ENCODE measurements at regions of chr2 and their contacts with region 1.

Region 1: DNA sequence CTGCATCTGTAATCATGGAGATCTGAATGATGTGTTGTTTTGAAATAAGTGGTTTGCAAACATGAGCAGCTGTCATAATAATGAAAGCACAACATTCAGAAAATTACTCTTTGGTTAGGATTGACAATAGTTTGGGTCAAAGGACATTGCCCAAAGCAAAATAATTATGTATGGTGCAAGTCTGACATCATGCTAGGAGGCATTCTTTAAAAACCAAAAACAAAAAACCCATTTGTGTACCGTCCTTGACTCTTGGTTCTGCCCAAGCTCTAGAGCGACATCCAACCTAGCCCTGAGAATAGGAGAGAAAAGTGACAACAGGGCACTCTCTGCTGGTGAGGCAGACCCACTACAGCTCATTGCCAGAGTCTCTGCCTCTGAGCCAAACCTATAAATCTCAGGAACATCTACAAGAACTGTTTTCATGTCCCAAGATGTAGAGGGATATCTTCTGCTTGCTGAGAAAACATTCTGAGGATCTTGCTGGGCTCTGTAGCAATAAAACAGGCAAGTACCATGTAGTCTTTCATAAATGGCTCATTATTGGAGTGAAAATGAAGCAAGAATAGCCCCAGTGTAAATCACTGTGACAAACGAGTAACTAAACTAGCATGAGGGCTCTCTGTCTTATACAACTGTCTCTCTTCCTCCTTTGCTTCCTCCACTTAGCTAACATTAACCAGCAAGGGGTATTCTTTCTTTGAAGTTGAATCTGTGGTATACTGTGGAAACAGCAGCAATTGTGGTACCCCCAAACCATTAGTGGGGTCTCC is 266.8 kb upstream of the CXCR4 start:
- DNase-seq: peak; percentile 73
- H3K4me3 Mint-ChIP-seq: no peak overlapping the region
- H3K27ac Mint-ChIP-seq: no peak overlapping the region
- H3K4me1 Mint-ChIP-seq: peaks cover 41% of the 10 kb centered on the region
- H3K27me3 Mint-ChIP-seq: no peaks in the 10 kb centered on the region

Region 2: DNA sequence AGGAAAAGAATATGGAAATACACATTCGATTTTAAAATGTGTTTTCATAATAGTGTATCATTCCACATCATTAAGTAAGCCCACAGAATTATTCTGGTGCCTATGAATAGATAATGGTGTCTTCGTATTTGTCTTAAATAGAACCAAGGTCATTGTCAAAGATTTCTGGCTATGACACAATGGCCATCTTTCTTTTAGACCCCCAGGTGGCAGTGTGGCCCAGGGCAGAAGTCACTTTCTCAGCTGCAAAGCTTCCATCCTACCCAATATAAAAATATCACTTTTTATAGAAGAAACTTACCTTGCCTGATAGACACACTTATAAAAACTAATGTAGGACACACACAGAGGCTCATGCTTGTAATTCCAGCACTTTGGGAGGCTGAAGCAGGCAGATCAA is 911.1 kb before region 1 on chr2:
- CTCF ChIA-PET with region 1: no interaction called
- intact Hi-C with region 1: loop called (anchors 10 kb)
- DNase-seq: peak; percentile 40
- H3K4me3 Mint-ChIP-seq: no peak overlapping the region
- H3K27ac Mint-ChIP-seq: no peak overlapping the region
- H3K4me1 Mint-ChIP-seq: peaks cover 2% of the 10 kb centered on the region
- H3K27me3 Mint-ChIP-seq: no peaks in the 10 kb centered on the region

Region 3: DNA sequence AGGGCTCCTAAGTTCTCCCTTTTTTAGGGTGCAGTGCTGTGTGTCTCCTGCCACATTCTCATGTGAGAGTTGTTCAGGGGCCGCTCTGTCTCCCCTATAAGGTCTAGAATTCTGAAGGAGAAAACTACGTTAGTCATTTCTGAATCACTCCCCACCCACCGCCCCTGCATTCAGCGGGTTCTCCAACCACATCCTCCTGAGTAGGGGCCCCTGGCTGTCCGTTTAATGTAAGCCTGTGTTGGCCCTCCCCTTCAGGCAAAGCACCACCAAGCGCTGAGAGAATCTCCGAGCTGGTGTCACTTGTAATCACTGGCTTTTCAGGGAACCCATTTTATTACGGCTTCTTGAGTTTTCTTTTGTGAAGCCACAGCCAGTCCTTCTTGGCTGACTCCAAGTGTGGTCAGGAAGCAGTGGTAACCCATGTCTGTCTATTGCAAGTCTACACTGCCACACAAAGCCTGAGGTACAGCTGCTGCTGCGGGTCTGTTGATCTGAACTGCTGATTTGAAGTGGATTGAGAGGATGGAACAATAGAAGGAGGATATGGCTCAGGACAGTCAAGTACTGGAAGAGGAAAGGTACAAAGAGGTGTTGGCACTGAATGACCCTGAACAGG is 564.6 kb before region 1 on chr2:
- CTCF ChIA-PET with region 1: interaction called, 6 read pairs
- intact Hi-C with region 1: loop called (anchors 1 kb)
- DNase-seq: peak; percentile 94
- H3K4me3 Mint-ChIP-seq: peak overlapping the region; percentile 64
- H3K27ac Mint-ChIP-seq: peak overlapping the region; percentile 79
- H3K4me1 Mint-ChIP-seq: peaks cover 48% of the 10 kb centered on the region
- H3K27me3 Mint-ChIP-seq: no peaks in the 10 kb centered on the region

Region 4: GRCh38 chr2:135948642-135949355 is 435.9 kb before region 1 on chr2:
- CTCF ChIA-PET with region 1: no interaction called
- intact Hi-C with region 1: loop called (anchors 1 kb)
- DNase-seq: peak; percentile 35
- H3K4me3 Mint-ChIP-seq: no peak overlapping the region
- H3K27ac Mint-ChIP-seq: peak overlapping the region; percentile 74
- H3K4me1 Mint-ChIP-seq: peaks cover 45% of the 10 kb centered on the region
- H3K27me3 Mint-ChIP-seq: no peaks in the 10 kb centered on the region

Region 5: DNA sequence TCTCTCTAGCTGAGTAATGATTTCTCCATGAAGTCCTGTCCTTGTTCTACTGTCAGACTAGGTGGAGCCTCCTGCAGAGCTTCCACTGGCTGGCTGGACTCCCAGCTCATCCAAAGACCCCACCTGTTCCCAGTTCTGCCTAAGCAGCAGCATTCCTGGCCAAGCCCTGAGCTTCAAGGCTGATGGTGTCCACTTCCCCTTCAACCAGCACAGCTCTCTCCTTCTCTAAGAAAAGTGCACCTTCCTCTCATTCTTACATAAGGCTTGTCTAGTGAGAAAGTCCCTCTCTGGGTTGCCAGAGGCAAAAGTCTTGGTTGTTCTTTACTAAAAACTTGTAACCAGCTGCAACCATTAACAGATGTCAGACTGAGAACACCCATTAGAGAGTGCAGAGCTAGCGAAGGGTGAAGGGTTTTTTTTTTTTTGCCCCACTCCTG is 325.7 kb before region 1 on chr2:
- CTCF ChIA-PET with region 1: interaction called, 5 read pairs
- intact Hi-C with region 1: loop called (anchors 1 kb)
- DNase-seq: no peak
- H3K4me3 Mint-ChIP-seq: no peak overlapping the region
- H3K27ac Mint-ChIP-seq: no peak overlapping the region
- H3K4me1 Mint-ChIP-seq: peaks cover 59% of the 10 kb centered on the region
- H3K27me3 Mint-ChIP-seq: no peaks in the 10 kb centered on the region

Region 6: GRCh38 chr2:136238286-136239078 is 146.2 kb before region 1 on chr2:
- CTCF ChIA-PET with region 1: interaction called, 6 read pairs
- intact Hi-C with region 1: loop called (anchors 1 kb)
- DNase-seq: peak; percentile 49
- H3K4me3 Mint-ChIP-seq: peak overlapping the region; percentile 10
- H3K27ac Mint-ChIP-seq: peak overlapping the region; percentile 77
- H3K4me1 Mint-ChIP-seq: peaks cover 39% of the 10 kb centered on the region
- H3K27me3 Mint-ChIP-seq: no peaks in the 10 kb centered on the region

Region 7: DNA sequence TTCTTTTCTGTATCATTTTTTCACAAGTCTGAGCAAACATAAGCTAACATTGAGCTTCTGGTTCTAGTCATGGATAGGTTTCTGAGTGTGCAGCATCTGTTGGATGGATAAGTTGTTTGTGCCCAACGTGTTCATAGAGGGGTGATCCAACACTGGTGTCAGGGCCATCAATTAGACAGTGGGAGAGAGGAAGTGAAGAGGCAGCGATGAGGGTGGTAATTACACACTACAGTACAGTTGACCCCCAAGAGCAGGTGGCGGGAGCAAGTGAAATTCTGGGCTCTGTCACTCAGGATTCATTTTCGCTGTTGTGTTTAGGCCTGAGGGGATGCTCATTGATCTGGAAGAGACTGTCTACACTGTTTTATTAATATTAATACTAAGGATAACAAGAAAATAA is 86.7 kb before region 1 on chr2:
- CTCF ChIA-PET with region 1: no interaction called
- intact Hi-C with region 1: no loop called
- DNase-seq: no peak
- H3K4me3 Mint-ChIP-seq: no peak overlapping the region
- H3K27ac Mint-ChIP-seq: no peak overlapping the region
- H3K4me1 Mint-ChIP-seq: peaks cover 4% of the 10 kb centered on the region
- H3K27me3 Mint-ChIP-seq: no peaks in the 10 kb centered on the region

Region 8: DNA sequence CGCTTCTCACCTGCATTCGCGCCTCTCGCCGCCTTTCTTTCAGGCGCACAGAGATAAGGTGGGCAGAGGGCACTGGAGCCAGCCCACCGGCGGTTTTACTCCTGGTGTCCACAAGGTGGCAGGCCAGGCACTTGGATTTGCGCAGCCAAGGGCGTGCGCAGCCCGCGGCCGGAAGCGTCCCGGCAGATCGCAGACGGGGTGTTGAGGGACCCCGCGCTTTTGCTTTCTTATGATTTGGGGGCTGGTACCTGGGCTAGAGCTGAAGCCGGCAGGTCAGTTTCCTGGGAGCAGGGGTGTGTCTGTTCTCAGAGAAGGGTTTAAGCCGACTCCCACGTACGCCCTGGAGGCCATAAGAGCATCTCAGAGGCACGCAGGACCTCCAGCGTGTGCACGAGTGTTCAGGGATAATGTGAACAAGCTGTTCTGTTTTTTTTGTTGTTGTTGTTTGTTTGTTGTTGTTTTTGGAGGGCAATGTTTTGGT is 38.8 kb after region 1 on chr2:
- CTCF ChIA-PET with region 1: interaction called, 8 read pairs
- intact Hi-C with region 1: loop called (anchors 1 kb)
- DNase-seq: peak; percentile 88
- H3K4me3 Mint-ChIP-seq: peak overlapping the region; percentile 76
- H3K27ac Mint-ChIP-seq: no peak overlapping the region
- H3K4me1 Mint-ChIP-seq: peaks cover 19% of the 10 kb centered on the region
- H3K27me3 Mint-ChIP-seq: peaks cover 22% of the 10 kb centered on the region

Measured in activated naive CD4-positive, alpha-beta T cell treated with anti-CD3 and anti-CD28 coated beads for 36 hours (primary cell).